Dorsolateral prefrontal cortex (tissue), 120 donors: ENCODE measurements at regions of chr10 and their contacts with region 1.

Region 1: GRCh38 chr10:127715782-127716378 is 21.1 kb upstream of the FOXI2 start:
- DNase-seq: no peak
- H3K4me3 ChIP-seq: no peak overlapping the region
- H3K27ac ChIP-seq: peak overlapping the region in 10 of 59 donors; percentile 4 to 65 (median 24)
- H3K27me3 ChIP-seq: peaks cover 0 to 2% (median 0%) of the 10 kb centered on the region in 45 donors
- CTCF ChIP-seq: peak; percentile 48 to 85 (median 67)

Region 2: GRCh38 chr10:127774766-127775559 is 59.1 kb after region 1 on chr10:
- intact Hi-C with region 1: no loop called
- DNase-seq: no peak
- H3K4me3 ChIP-seq: no peak overlapping the region
- H3K27ac ChIP-seq: no peak overlapping the region
- H3K27me3 ChIP-seq: peaks cover 0 to 5% (median 0%) of the 10 kb centered on the region in 45 donors
- CTCF ChIP-seq: no peak

Region 3: GRCh38 chr10:127813290-127813689 is 97.4 kb after region 1 on chr10:
- intact Hi-C with region 1: loop called in 1 of 2 experiments (anchors 2 kb)
- DNase-seq: no peak
- H3K4me3 ChIP-seq: no peak overlapping the region
- H3K27ac ChIP-seq: no peak overlapping the region
- H3K27me3 ChIP-seq: peaks cover 0 to 3% (median 0%) of the 10 kb centered on the region in 45 donors
- CTCF ChIP-seq: peak in 53 of 56 donors; percentile 22 to 76 (median 55)

Region 4: DNA sequence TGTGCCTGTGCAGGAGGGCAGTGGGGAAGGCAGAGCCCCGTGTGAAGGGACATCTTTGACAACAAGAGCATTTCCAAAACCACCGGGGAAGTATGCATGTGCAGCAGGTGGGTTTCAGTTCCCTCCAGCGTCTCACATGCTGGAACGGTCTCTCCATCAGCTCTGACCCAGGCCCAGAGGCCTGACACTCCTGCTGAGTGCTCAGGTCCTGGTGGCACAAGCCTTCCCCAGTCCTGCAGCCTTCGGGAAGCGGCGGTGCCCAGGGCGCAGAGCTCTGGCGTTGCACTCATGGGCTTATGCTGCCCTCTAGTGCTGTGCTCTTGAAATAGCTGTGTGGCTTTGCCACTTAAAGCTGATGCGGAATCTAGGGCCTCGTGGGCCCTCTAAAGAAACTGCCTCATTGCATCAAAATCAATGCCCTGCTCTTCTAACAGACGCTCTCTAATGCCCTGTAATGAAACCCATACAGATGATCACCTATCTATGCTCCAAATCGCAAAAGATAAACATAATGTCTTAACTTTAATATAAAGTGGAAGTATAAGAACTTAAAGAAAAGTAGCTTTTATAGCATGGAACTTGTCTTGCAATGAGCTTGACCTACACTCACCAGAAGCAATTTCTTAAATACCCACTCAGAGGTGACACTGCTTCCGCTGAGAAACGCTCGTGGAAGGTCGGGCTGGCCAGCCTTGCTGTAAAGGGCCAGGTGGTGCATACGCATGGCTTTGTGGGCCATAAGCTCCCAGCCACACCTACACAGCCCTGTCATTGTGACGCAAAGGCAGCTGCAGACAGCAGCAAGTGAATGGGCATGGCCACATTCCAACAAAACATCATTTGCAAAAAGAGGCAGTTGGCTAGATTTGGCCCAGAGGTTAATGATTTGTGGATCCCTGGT is 138.2 kb after region 1 on chr10:
- intact Hi-C with region 1: loop called (anchors 5 kb)
- DNase-seq: peak; percentile 29 to 86 (median 76)
- H3K4me3 ChIP-seq: peak overlapping the region in 4 of 59 donors; percentile 15 to 34 (median 24)
- H3K27ac ChIP-seq: peak overlapping the region in 1 of 59 donors; percentile 25
- H3K27me3 ChIP-seq: no peaks in the 10 kb centered on the region
- CTCF ChIP-seq: peak; percentile 50 to 98 (median 86)

Region 5: GRCh38 chr10:128011175-128011979 is 295.5 kb after region 1 on chr10:
- intact Hi-C with region 1: loop called in 1 of 2 experiments (anchors 10 kb)
- DNase-seq: peak; percentile 74 to 89 (median 83)
- H3K4me3 ChIP-seq: peak overlapping the region in 55 of 59 donors; percentile 1 to 61 (median 33)
- H3K27ac ChIP-seq: peak overlapping the region in 3 of 59 donors; percentile 9 to 44 (median 28)
- H3K27me3 ChIP-seq: no peaks in the 10 kb centered on the region
- CTCF ChIP-seq: peak; percentile 89 to 100 (median 99)